ENCODE measurements at regions of chr1 and their contacts with region 1.

Region 1: GRCh38 chr1:214328770-214329469 is 48.0 kb downstream of the SMYD2 start:
- DNase-seq: peak; percentile 80 to 96 (median 85)
- H3K4me3 ChIP-seq: no peak overlapping the region
- H3K27ac ChIP-seq: no peak overlapping the region
- H3K4me1 ChIP-seq: peaks cover 0 to 10% of the 10 kb centered on the region in 2 donors
- H3K27me3 ChIP-seq: no peaks in the 10 kb centered on the region
- CTCF ChIP-seq: peak; percentile 76 to 98 (median 95)
- POLR2A ChIP-seq: no peak

Region 2: GRCh38 chr1:214213136-214213535 is 115.8 kb before region 1 on chr1:
- intact Hi-C with region 1: loop called (anchors 5 kb)
- DNase-seq: no peak
- H3K4me3 ChIP-seq: no peak overlapping the region
- H3K27ac ChIP-seq: no peak overlapping the region
- H3K4me1 ChIP-seq: peaks cover 0 to 8% of the 10 kb centered on the region in 2 donors
- H3K27me3 ChIP-seq: no peaks in the 10 kb centered on the region
- CTCF ChIP-seq: no peak
- POLR2A ChIP-seq: no peak

Region 3: GRCh38 chr1:214261206-214262123 is 67.5 kb before region 1 on chr1:
- intact Hi-C with region 1: loop called (anchors 5 kb)
- DNase-seq: peak; percentile 72 to 95 (median 86)
- H3K4me3 ChIP-seq: no peak overlapping the region
- H3K27ac ChIP-seq: peak overlapping the region in 1 of 5 donors; percentile 32
- H3K4me1 ChIP-seq: no peaks in the 10 kb centered on the region
- H3K27me3 ChIP-seq: peaks cover 31% of the 10 kb centered on the region
- CTCF ChIP-seq: peak; percentile 79 to 97 (median 89)
- POLR2A ChIP-seq: no peak

Region 4: GRCh38 chr1:214584805-214585766 is 256.2 kb after region 1 on chr1:
- intact Hi-C with region 1: loop called (anchors 5 kb)
- DNase-seq: no peak
- H3K4me3 ChIP-seq: no peak overlapping the region
- H3K27ac ChIP-seq: no peak overlapping the region
- H3K4me1 ChIP-seq: no peaks in the 10 kb centered on the region
- H3K27me3 ChIP-seq: no peaks in the 10 kb centered on the region
- CTCF ChIP-seq: peak; percentile 61 to 95 (median 79)
- POLR2A ChIP-seq: no peak

Region 5: GRCh38 chr1:215526553-215527151 is 1197.7 kb after region 1 on chr1:
- intact Hi-C with region 1: loop called in 1 of 2 experiments (anchors 10 kb)
- DNase-seq: no peak
- H3K4me3 ChIP-seq: no peak overlapping the region
- H3K27ac ChIP-seq: no peak overlapping the region
- H3K4me1 ChIP-seq: peaks cover 0 to 7% of the 10 kb centered on the region in 2 donors
- H3K27me3 ChIP-seq: no peaks in the 10 kb centered on the region
- CTCF ChIP-seq: peak; percentile 66 to 84 (median 80)
- POLR2A ChIP-seq: no peak

Measured in adrenal gland (tissue), 19 donors.